ENCODE measurements at regions of chr2 and their contacts with region 1.

Region 1: DNA sequence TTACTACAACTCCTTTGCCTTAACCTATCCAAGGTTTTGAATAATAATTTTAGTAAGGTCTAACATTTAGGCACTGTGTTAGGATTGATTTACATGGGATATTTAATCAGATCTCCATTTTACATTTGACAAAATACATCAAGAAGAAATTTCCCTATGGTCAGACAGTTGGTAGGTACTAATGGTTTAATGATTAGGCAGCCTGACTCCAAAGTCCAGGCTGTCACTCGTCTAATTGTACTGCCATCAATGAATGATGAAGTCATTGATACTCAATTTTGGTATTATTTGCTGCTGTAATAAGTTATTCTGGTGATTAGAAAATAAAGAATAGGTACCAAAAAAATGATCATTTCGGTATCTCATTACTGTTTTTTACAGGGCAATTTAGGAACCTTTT is 14.1 kb downstream of the BBS5 start:
- DNase-seq: no peak
- ATAC-seq: no peak
- H3K4me3 ChIP-seq: no peak overlapping the region
- H3K27ac ChIP-seq: no peak overlapping the region
- H3K4me1 ChIP-seq: no peaks in the 10 kb centered on the region
- H3K27me3 ChIP-seq: no peaks in the 10 kb centered on the region
- CTCF ChIP-seq: no peak

Region 2: DNA sequence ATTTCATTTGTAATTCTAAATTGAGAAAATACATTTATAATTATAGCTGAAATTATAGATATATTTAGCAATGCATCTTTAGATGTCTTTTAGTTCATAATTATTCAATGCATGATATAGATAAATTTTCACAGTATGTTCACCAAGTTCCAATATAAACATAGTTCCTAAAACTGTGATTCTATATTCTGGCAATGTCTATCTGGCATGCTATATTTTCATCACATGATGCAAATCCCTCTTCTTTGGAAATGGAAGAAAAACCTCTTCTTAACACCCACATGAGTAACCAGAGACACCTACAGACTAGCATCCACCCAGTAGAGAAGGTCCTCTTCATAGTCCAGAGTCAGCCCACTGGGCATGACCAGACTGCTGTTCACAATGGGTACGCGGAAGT is 288.2 kb before region 1 on chr2:
- CTCF ChIA-PET with region 1: no interaction called
- POLR2A ChIA-PET with region 1: no interaction called
- in situ Hi-C with region 1: no loop called
- intact Hi-C with region 1: no loop called
- DNase-seq: no peak
- ATAC-seq: no peak
- H3K4me3 ChIP-seq: no peak overlapping the region
- H3K27ac ChIP-seq: no peak overlapping the region
- H3K4me1 ChIP-seq: no peaks in the 10 kb centered on the region
- H3K27me3 ChIP-seq: peaks cover 2% of the 10 kb centered on the region
- CTCF ChIP-seq: no peak

Region 3: DNA sequence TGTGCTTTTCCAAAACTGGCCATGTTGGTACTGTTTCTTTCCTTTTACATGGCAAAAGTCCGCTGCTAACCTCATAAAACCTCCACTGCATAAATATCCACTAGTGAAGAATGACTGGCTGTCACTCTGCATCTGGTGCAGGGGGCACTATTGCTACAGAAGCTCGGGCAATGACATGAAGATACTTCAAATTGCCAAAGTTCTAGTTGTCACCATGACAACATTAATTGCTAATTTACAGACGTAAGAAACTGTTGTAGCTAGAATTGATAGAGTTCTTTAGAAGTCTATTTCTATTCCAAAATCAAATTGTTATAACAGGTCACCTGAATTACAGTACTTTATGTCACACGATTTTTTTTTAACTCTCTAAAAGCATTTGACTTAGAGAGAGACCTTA is 200.0 kb after region 1 on chr2:
- CTCF ChIA-PET with region 1: no interaction called
- POLR2A ChIA-PET with region 1: interaction called, 11 read pairs
- in situ Hi-C with region 1: no loop called
- intact Hi-C with region 1: no loop called
- DNase-seq: no peak
- ATAC-seq: no peak
- H3K4me3 ChIP-seq: peak overlapping the region; percentile 73 to 89; a peak in 3 of 4 replicates
- H3K27ac ChIP-seq: no peak overlapping the region
- H3K4me1 ChIP-seq: peaks cover 11% of the 10 kb centered on the region
- H3K27me3 ChIP-seq: no peaks in the 10 kb centered on the region
- CTCF ChIP-seq: peak; percentile 28; the same call in 1 of the 2 replicates